CD14-positive monocyte (primary cell): ENCODE measurements at regions of chr9 and their contacts with region 1.

Region 1: DNA sequence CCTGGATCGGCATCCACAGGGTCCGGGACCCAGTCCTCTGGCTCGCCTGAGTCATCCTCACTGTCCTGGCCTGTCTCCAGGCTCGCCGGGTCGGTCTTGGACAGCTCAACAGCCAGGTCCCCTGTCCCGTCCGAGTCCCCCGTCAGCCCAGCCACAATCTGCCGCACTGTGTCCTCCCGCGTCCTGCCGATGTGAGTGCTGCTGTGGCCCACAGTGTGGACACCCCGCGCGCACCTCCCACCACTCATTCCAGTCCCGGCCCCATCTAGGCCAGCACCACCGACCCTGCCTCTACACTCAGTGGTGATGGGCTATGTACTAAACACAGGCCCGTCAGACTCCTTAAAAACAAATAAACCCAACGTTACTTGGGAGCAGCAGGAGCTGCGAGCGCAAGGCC is 6.7 kb downstream of the ANAPC2 start:
- DNase-seq: no peak
- H3K4me3 ChIP-seq: no peak overlapping the region
- H3K4me3 Mint-ChIP-seq: no peak overlapping the region
- H3K27ac ChIP-seq: no peak overlapping the region
- H3K27ac Mint-ChIP-seq: no peak overlapping the region
- H3K4me1 ChIP-seq: peaks cover 1 to 7% of the 10 kb centered on the region in 2 donors
- H3K4me1 Mint-ChIP-seq: peaks cover 4% of the 10 kb centered on the region
- H3K27me3 ChIP-seq: no peaks in the 10 kb centered on the region
- H3K27me3 Mint-ChIP-seq: peaks cover 0 to 2% (median 1%) of the 10 kb centered on the region in 3 donors
- CTCF ChIP-seq: no peak

Region 2: DNA sequence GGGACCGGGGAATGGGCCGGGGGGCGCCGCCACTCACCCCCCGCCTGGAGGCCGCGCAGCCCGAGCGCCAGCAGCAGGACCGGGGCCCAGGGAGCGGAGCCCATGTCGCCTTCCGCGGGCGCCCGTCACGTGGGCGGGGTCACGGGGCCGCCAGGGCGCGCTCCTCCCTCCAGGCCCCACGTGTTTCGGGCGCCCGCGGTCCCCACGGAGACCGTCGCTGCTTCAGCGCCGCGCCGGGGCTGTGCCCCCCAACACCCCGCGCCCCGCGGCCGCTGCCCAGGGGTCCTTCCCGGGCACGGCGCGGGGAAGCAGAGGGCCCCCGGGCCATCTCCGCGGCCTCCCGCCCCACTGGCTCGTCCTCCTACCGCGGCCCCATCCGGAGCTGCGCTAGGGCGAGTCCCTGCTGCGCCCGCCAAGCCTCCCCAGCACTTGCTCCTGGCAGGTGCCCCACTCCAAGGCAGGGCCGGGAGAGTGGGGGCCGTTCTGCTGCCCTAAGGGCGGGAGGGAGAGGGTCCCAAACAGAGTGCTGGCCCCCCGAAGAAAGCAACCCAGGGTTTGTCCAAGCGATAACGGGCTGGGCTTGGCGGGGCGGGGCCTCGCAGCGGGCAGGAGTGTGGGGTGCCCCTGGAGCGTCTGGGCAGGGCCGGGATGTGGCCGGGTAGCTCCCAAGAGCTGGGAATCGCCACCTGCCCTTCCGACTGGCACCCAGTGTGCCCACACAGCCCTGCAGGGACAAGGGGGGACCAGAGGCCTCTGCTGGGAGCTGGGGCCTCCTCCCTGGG is 66.9 kb before region 1 on chr9 and contains the start of gene DPP7:
- intact Hi-C with region 1: loop called in 1 of 2 experiments (anchors 5 kb)
- DNase-seq: peak; percentile 60 to 73 (median 69)
- H3K4me3 ChIP-seq: peak within 1 kb of the TSS; percentile 30 to 70 (median 34)
- H3K4me3 Mint-ChIP-seq: peak within 1 kb of the TSS; percentile 60
- H3K27ac ChIP-seq: no peak within 1 kb of the TSS
- H3K27ac Mint-ChIP-seq: peak within 1 kb of the TSS in 1 of 7 donors; percentile 68
- H3K4me1 ChIP-seq: peaks cover 15 to 17% of the 10 kb centered on the region in 2 donors
- H3K4me1 Mint-ChIP-seq: peaks cover 12% of the 10 kb centered on the region
- H3K27me3 ChIP-seq: peaks cover 0 to 3% of the 10 kb centered on the region in 2 donors
- H3K27me3 Mint-ChIP-seq: peaks cover 3 to 7% (median 6%) of the 10 kb centered on the region in 3 donors
- CTCF ChIP-seq: no peak
- polyA plus RNA-seq, gene DPP7: 68.3 to 287 (median 150) TPM

Region 3: GRCh38 chr9:137129456-137130175 is 52.1 kb before region 1 on chr9:
- intact Hi-C with region 1: no loop called
- DNase-seq: peak; percentile 84 to 88 (median 85)
- H3K4me3 ChIP-seq: peak overlapping the region; percentile 63 to 82 (median 67)
- H3K4me3 Mint-ChIP-seq: peak overlapping the region; percentile 80 to 87
- H3K27ac ChIP-seq: peak overlapping the region in 1 of 2 donors; percentile 31
- H3K27ac Mint-ChIP-seq: peak overlapping the region in 4 of 7 donors; percentile 8 to 42 (median 27)
- H3K4me1 ChIP-seq: peaks cover 33 to 42% of the 10 kb centered on the region in 2 donors
- H3K4me1 Mint-ChIP-seq: peaks cover 26% of the 10 kb centered on the region
- H3K27me3 ChIP-seq: peaks cover 0 to 25% of the 10 kb centered on the region in 2 donors
- H3K27me3 Mint-ChIP-seq: peaks cover 34 to 47% (median 38%) of the 10 kb centered on the region in 3 donors
- CTCF ChIP-seq: no peak

Region 4: DNA sequence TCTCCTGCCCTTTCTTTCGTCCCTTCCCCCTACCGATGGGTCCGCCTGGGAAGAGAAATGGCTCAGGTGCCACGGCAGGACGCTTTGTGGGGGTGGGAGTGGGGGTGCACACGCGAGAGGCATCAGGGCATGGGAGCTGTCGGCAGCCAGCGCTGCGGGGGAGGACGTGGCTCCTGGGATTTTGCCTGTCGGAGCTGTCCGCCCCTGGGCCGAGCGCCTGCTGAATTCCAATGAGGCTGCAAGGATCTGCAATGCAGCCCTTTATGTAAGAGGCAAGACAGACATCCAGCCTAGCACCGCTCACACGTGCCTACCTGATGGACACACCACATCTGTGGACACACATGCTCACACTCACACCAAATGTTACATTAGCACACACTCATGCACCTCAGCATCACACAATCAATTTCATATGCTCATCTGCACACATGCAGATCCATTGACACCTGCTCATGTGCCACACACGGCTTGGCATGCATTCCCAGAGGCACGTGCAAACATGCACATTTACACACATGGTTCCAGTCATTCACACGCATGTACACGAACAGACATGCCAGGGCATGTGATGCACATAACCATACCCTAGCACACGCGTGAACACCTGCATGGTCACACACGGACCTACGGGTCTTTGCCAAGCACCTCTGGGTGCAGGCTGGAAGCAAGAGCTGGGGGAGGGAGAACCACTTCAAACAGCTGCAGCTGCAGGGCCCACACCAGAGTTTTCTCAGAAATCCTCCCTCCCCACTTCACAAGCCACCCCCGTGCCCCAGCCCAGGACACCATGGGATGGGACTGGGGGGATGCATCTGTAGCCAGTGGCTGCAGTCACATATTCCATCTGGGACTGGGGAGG is 41.3 kb before region 1 on chr9:
- intact Hi-C with region 1: no loop called
- DNase-seq: no peak
- H3K4me3 ChIP-seq: no peak overlapping the region
- H3K4me3 Mint-ChIP-seq: peak overlapping the region in 1 of 2 donors; percentile 24
- H3K27ac ChIP-seq: no peak overlapping the region
- H3K27ac Mint-ChIP-seq: no peak overlapping the region
- H3K4me1 ChIP-seq: no peaks in the 10 kb centered on the region
- H3K4me1 Mint-ChIP-seq: no peaks in the 10 kb centered on the region
- H3K27me3 ChIP-seq: peaks cover 14 to 53% of the 10 kb centered on the region in 2 donors
- H3K27me3 Mint-ChIP-seq: peaks cover 53 to 69% (median 56%) of the 10 kb centered on the region in 3 donors
- CTCF ChIP-seq: no peak

Region 5: GRCh38 chr9:137316012-137316976 is 134.6 kb after region 1 on chr9:
- intact Hi-C with region 1: no loop called
- DNase-seq: peak in 1 of 3 donors; percentile 19
- H3K4me3 ChIP-seq: peak overlapping the region in 1 of 3 experiments; percentile 59
- H3K4me3 Mint-ChIP-seq: peak overlapping the region in 1 of 2 donors; percentile 67
- H3K27ac ChIP-seq: no peak overlapping the region
- H3K27ac Mint-ChIP-seq: no peak overlapping the region
- H3K4me1 ChIP-seq: peaks cover 17 to 24% of the 10 kb centered on the region in 2 donors
- H3K4me1 Mint-ChIP-seq: peaks cover 5% of the 10 kb centered on the region
- H3K27me3 ChIP-seq: peaks cover 0 to 20% of the 10 kb centered on the region in 2 donors
- H3K27me3 Mint-ChIP-seq: peaks cover 2 to 19% (median 4%) of the 10 kb centered on the region in 3 donors
- CTCF ChIP-seq: no peak